ENCODE measurements at regions of chr18 and their contacts with region 1.

Region 1: GRCh38 chr18:8389391-8390340 is 219.6 kb upstream of the RAB12 start:
- DNase-seq: peak; percentile 68
- H3K4me3 Mint-ChIP-seq: no peak overlapping the region
- H3K27ac Mint-ChIP-seq: no peak overlapping the region
- H3K4me1 Mint-ChIP-seq: no peaks in the 10 kb centered on the region
- H3K27me3 Mint-ChIP-seq: no peaks in the 10 kb centered on the region

Region 2: DNA sequence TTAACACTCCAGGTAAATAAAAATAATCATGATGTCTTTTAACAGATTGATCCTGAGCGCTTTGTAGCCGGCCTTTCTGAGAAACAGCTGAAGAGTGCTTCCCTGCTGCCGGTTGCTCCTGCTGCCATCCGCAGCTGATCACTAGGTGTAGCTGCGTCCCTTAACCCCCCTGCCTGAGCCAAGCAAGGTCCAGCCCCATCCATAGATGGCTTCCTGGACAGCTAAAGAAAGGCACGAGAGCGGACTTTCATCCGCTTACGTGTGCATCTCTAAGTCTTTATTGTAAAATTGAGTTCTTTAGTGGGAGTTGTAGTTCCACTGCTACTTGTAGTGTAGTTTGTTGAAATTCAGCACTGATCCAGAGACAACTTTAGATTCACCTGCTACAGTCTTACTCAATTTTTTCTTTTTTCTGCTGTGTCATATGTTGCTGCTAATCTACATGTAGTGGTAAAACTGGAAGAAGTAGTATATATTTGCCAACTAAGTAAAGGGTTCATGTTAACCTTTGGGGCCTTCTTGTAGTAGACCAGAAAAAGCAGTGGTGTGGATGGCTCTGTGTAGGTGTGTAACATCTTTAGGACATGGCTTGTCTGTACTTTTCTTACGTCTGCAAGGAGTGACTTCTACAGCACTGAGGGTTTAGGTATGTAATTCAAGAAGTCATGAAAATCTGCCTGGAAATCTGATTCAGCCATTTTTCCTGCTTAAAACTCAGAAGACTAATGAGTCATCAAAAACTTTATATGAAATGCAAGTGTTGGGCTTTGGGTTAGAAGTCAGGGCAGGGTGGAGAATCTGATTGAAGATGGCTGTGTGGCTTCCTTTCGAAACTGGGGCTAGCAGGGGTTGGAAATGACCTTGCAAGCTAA is 814.3 kb before region 1 on chr18:
- CTCF ChIA-PET with region 1: no interaction called
- intact Hi-C with region 1: loop called (anchors 10 kb)
- DNase-seq: no peak
- H3K4me3 Mint-ChIP-seq: no peak overlapping the region
- H3K27ac Mint-ChIP-seq: no peak overlapping the region
- H3K4me1 Mint-ChIP-seq: peaks cover 2% of the 10 kb centered on the region
- H3K27me3 Mint-ChIP-seq: peaks cover 26% of the 10 kb centered on the region

Region 3: GRCh38 chr18:7789856-7790552 is 599.7 kb before region 1 on chr18:
- CTCF ChIA-PET with region 1: no interaction called
- intact Hi-C with region 1: loop called (anchors 5 kb)
- DNase-seq: no peak
- H3K4me3 Mint-ChIP-seq: no peak overlapping the region
- H3K27ac Mint-ChIP-seq: no peak overlapping the region
- H3K4me1 Mint-ChIP-seq: no peaks in the 10 kb centered on the region
- H3K27me3 Mint-ChIP-seq: no peaks in the 10 kb centered on the region

Region 4: GRCh38 chr18:8208716-8209115 is 180.9 kb before region 1 on chr18:
- CTCF ChIA-PET with region 1: no interaction called
- intact Hi-C with region 1: no loop called
- DNase-seq: no peak
- H3K4me3 Mint-ChIP-seq: no peak overlapping the region
- H3K27ac Mint-ChIP-seq: no peak overlapping the region
- H3K4me1 Mint-ChIP-seq: no peaks in the 10 kb centered on the region
- H3K27me3 Mint-ChIP-seq: no peaks in the 10 kb centered on the region

Region 5: DNA sequence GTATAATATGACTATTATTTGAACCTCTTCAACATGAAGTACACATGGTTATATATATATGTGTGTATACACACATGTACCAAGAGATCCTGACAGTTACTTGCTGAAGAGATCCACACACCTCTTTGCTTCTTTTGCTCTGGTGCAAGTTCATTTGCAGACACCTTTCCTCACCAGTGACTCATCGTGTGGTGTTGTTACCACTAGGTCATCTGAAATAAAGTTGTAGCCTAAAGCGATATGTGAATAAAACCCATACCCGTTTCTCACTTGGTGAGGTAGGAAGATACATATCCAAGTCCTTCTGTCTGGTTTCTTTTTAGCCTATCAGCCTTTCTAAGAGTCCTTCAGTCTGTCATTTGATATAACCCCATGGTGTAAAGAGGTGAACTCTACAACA is 159.9 kb before region 1 on chr18:
- CTCF ChIA-PET with region 1: no interaction called
- intact Hi-C with region 1: no loop called
- DNase-seq: no peak
- H3K4me3 Mint-ChIP-seq: no peak overlapping the region
- H3K27ac Mint-ChIP-seq: no peak overlapping the region
- H3K4me1 Mint-ChIP-seq: no peaks in the 10 kb centered on the region
- H3K27me3 Mint-ChIP-seq: no peaks in the 10 kb centered on the region

Region 6: DNA sequence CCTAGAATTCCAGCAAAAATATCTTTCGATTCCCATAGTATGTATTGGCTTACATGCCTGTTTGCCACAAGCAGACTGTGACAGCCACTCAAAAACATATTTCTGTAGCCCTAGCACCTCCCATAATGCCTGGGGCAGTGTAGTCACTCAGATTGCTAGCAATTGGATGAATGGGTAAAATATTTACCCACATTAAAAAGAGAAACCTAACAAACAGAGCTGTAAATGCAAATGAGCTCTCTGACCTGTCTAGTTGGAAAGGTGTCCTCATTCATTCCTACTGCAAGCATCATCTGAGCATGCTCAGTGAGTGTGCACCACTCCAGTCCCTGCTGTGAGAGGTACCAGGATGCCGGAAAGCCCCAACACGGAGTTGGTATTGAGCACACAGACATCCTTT is 14.4 kb before region 1 on chr18:
- CTCF ChIA-PET with region 1: no interaction called
- intact Hi-C with region 1: no loop called
- DNase-seq: no peak
- H3K4me3 Mint-ChIP-seq: no peak overlapping the region
- H3K27ac Mint-ChIP-seq: no peak overlapping the region
- H3K4me1 Mint-ChIP-seq: no peaks in the 10 kb centered on the region
- H3K27me3 Mint-ChIP-seq: no peaks in the 10 kb centered on the region

Region 7: DNA sequence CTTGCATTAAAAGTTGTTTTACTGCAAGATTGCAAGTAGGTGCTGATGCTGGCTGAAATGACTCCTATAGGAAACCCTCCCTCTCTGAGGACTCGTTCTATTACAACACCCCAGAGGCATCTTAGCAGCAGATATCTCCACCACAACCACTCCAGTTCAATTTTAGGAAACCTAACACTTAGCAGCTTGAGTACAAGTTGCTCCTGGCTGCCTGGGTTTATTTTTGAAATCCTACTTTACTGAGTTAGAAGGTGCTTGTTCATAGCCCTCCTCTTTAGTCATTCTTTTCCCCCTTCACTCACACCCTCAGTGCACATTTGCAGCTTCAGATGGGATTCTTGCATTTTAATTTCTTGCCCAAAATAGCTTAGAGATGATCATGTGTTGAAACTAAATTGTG is 427.1 kb after region 1 on chr18:
- CTCF ChIA-PET with region 1: no interaction called
- intact Hi-C with region 1: no loop called
- DNase-seq: no peak
- H3K4me3 Mint-ChIP-seq: no peak overlapping the region
- H3K27ac Mint-ChIP-seq: no peak overlapping the region
- H3K4me1 Mint-ChIP-seq: no peaks in the 10 kb centered on the region
- H3K27me3 Mint-ChIP-seq: no peaks in the 10 kb centered on the region

Measured in activated naive CD4-positive, alpha-beta T cell treated with anti-CD3 and anti-CD28 coated beads for 36 hours (primary cell).